Heart right ventricle (tissue), 16 donors: ENCODE measurements at regions of chr21 and their contacts with region 1.

Region 1: DNA sequence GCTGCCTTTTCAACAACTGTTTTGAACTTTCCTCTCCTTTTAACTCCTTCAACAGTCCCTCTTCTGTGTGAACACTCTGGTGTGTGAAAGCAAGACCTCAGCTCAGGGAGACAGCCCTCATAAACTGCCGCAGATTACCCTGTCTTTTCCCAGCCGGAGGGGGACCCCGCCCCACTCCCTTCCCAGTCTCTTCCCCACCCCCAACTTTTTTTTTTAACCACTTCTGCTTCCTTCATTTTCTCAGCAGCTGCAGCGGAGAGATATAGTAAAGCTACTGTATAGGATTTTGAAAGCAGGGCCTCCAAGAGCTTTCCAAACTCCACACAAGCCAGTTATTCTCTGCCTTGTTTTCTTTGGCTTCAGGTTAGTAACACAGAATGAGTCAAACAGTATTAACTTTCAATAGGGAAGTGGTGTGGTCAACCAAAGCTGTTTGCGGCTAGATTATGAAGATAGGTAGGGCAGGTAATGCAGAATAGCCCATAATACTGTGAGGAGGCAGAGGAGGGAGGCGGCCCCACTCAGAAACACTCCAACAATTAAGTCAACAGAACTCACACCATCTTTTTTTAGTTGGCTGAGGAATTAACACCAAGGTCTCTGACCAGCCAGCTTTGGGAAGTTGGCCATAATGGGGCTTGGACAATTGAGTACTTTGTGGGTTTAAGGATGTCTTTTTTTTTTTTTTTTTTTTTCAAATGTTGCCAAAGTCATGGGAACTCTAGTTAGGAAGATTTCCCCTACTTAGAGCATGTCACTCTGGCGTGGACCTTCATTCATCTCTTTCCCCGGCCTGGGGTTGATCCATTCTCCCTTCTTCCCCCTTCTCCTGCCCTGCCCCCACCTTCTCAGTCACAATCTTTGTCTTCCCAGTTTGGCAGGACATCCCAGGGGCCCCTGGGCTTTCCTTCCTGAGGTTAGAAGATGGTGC is 177.0 kb downstream of the CLIC6 start:
- DNase-seq: no peak
- ATAC-seq: peak in 7 of 8 donors; percentile 14 to 60 (median 50)
- H3K4me3 ChIP-seq: no peak overlapping the region
- H3K27ac ChIP-seq: peak overlapping the region in 5 of 10 donors; percentile 43 to 58 (median 51)
- H3K4me1 ChIP-seq: peaks cover 0 to 61% (median 6%) of the 10 kb centered on the region in 9 donors
- H3K27me3 ChIP-seq: peaks cover 0 to 10% (median 0%) of the 10 kb centered on the region in 7 donors
- CTCF ChIP-seq: no peak

Region 2: GRCh38 chr21:34801519-34802132 is 44.2 kb before region 1 on chr21:
- intact Hi-C with region 1: loop called in 1 of 10 experiments (anchors 2 kb)
- DNase-seq: no peak
- ATAC-seq: no peak
- H3K4me3 ChIP-seq: no peak overlapping the region
- H3K27ac ChIP-seq: no peak overlapping the region
- H3K4me1 ChIP-seq: peaks cover 0 to 47% (median 0%) of the 10 kb centered on the region in 9 donors
- H3K27me3 ChIP-seq: no peaks in the 10 kb centered on the region
- CTCF ChIP-seq: peak in 3 of 9 donors; percentile 22 to 25 (median 24)